ENCODE measurements at regions of chr12 and their contacts with region 1.

Region 1: DNA sequence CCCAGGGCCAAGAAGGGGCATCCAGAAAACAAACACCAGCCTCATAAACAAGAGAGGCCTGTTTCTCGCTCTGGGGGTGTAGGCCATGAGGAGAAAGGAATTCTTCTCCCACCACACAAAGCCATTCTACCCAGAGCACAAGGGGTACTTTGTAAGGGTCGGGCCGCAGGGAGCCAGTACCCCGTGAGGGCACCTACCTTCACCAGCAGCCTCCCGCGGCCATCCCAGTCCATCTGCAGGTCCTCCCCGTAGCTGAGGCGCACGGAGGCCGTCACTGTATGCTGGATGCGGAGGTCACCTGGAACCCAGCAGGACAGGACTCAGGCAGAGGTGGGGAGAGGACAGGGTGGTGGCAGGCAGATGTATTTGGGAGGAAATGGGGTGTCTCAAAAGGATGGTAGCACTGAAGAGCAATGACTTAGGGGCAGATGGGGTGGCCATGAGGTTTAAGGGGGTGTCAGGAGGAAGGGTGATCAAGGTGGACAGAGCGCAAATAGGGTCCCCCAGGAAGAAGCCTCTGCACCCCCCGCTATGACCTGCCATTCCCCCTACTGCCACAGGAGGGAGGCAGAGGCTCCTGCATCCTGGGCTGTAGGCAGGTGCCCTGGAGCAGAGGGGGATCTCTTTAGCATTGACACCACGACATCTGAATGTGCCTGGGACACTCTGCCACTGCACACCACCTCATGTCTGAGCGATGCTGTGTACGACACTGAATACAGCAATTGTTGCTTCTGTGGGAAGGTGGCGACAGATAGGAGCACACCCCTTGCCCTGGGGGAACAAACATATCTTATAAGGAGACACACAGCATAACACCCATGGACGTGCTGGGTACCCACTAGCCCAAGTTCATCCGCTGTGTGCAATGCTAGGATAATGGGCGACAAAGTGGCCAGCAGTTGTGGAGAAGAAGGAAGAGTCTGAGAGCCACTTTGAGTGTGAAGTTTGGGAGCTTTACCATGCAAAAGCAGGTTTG is 61.4 kb downstream of the VWF start:
- DNase-seq: peak in 8 of 10 donors; percentile 46 to 78 (median 62)
- H3K4me3 ChIP-seq: peak overlapping the region in 6 of 59 donors; percentile 7 to 41 (median 28)
- H3K27ac ChIP-seq: peak overlapping the region in 57 of 59 donors; percentile 2 to 90 (median 72)
- H3K27me3 ChIP-seq: no peaks in the 10 kb centered on the region
- CTCF ChIP-seq: peak; percentile 66 to 96 (median 90)

Region 2: GRCh38 chr12:5965950-5966383 is 97.1 kb before region 1 on chr12:
- intact Hi-C with region 1: no loop called
- DNase-seq: peak in 8 of 10 donors; percentile 15 to 67 (median 46)
- H3K4me3 ChIP-seq: no peak overlapping the region
- H3K27ac ChIP-seq: no peak overlapping the region
- H3K27me3 ChIP-seq: no peaks in the 10 kb centered on the region
- CTCF ChIP-seq: peak; percentile 22 to 80 (median 69)

Region 3: GRCh38 chr12:6154730-6155459 is 91.8 kb after region 1 on chr12:
- intact Hi-C with region 1: loop called in 1 of 2 experiments (anchors 5 kb)
- DNase-seq: no peak
- H3K4me3 ChIP-seq: no peak overlapping the region
- H3K27ac ChIP-seq: peak overlapping the region in 24 of 59 donors; percentile 1 to 75 (median 28)
- H3K27me3 ChIP-seq: no peaks in the 10 kb centered on the region
- CTCF ChIP-seq: no peak

Measured in dorsolateral prefrontal cortex (tissue), 120 donors.